ENCODE measurements at regions of chr20 and their contacts with region 1.

Region 1: GRCh38 chr20:47379433-47380150 is 23.1 kb upstream of the ZMYND8 start:
- DNase-seq: no peak
- ATAC-seq: no peak
- H3K4me3 ChIP-seq: no peak overlapping the region
- H3K4me3 Mint-ChIP-seq: peak overlapping the region in 1 of 10 donors; percentile 11
- H3K27ac ChIP-seq: no peak overlapping the region
- H3K27ac Mint-ChIP-seq: peak overlapping the region in 2 of 9 donors; percentile 52 to 73
- H3K4me1 ChIP-seq: peaks cover 0 to 6% of the 10 kb centered on the region in 2 donors
- H3K4me1 Mint-ChIP-seq: peaks cover 0 to 33% (median 10%) of the 10 kb centered on the region in 7 donors
- H3K27me3 ChIP-seq: peaks cover 0 to 2% of the 10 kb centered on the region in 2 donors
- H3K27me3 Mint-ChIP-seq: no peaks in the 10 kb centered on the region

Region 2: GRCh38 chr20:47196091-47197081 is 183.2 kb before region 1 on chr20:
- CTCF ChIA-PET with region 1: interaction called, 31 read pairs
- POLR2A ChIA-PET with region 1: interaction called, 4 read pairs
- intact Hi-C with region 1: loop called (anchors 1 kb)
- DNase-seq: peak; percentile 38 to 85 (median 54)
- ATAC-seq: peak; percentile 91
- H3K4me3 ChIP-seq: no peak overlapping the region
- H3K4me3 Mint-ChIP-seq: peak overlapping the region in 1 of 10 donors; percentile 38
- H3K27ac ChIP-seq: no peak overlapping the region
- H3K27ac Mint-ChIP-seq: no peak overlapping the region
- H3K4me1 ChIP-seq: no peaks in the 10 kb centered on the region
- H3K4me1 Mint-ChIP-seq: peaks cover 0 to 12% (median 0%) of the 10 kb centered on the region in 7 donors
- H3K27me3 ChIP-seq: no peaks in the 10 kb centered on the region
- H3K27me3 Mint-ChIP-seq: peaks cover 0 to 8% (median 0%) of the 10 kb centered on the region in 5 donors

Region 3: GRCh38 chr20:47206962-47207641 is 172.5 kb before region 1 on chr20:
- CTCF ChIA-PET with region 1: no interaction called
- POLR2A ChIA-PET with region 1: no interaction called
- intact Hi-C with region 1: no loop called
- DNase-seq: no peak
- ATAC-seq: no peak
- H3K4me3 ChIP-seq: no peak overlapping the region
- H3K4me3 Mint-ChIP-seq: no peak overlapping the region
- H3K27ac ChIP-seq: no peak overlapping the region
- H3K27ac Mint-ChIP-seq: peak overlapping the region in 4 of 9 donors; percentile 8 to 69 (median 24)
- H3K4me1 ChIP-seq: no peaks in the 10 kb centered on the region
- H3K4me1 Mint-ChIP-seq: peaks cover 0 to 7% (median 4%) of the 10 kb centered on the region in 7 donors
- H3K27me3 ChIP-seq: no peaks in the 10 kb centered on the region
- H3K27me3 Mint-ChIP-seq: no peaks in the 10 kb centered on the region

Region 4: DNA sequence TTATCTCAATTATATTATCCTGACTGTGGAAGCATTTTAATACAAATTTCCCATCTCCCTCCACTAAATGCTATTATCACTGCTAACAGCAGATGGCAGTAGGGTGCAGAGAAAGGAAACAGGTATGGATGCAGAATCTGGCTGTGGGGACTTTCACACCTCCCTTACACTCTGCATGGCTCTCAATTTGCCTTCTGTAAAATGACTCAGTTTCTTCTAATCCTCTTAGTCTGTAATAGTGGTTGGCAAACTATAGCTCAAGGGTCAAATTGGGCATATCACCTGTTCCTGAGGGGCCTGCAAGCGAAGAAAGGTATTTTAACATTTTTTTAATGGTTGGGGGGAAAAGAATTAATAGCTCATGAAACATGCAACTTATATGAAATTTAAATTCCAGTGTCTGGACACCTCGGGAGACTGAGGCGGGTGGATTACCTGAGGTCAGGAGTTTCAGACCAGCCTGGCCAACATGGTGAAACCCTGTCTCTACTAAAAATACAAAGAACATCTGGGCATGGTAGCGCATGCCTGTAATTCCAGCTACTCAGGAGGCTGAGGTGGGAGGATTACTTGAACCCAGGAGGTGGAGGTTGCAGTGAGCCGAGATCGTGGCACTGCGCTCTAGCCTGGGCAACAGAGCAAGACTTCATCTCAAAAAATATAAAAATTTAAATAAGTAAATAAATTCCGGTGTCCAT is 106.5 kb before region 1 on chr20:
- CTCF ChIA-PET with region 1: interaction called, 305 read pairs
- POLR2A ChIA-PET with region 1: interaction called, 16 read pairs
- intact Hi-C with region 1: loop called (anchors 1 kb)
- DNase-seq: peak in 8 of 9 donors; percentile 32 to 72 (median 56)
- ATAC-seq: peak; percentile 91
- H3K4me3 ChIP-seq: no peak overlapping the region
- H3K4me3 Mint-ChIP-seq: peak overlapping the region in 1 of 10 donors; percentile 35
- H3K27ac ChIP-seq: no peak overlapping the region
- H3K27ac Mint-ChIP-seq: peak overlapping the region in 6 of 9 donors; percentile 4 to 94 (median 59)
- H3K4me1 ChIP-seq: peaks cover 0 to 2% of the 10 kb centered on the region in 2 donors
- H3K4me1 Mint-ChIP-seq: peaks cover 0 to 43% (median 13%) of the 10 kb centered on the region in 7 donors
- H3K27me3 ChIP-seq: no peaks in the 10 kb centered on the region
- H3K27me3 Mint-ChIP-seq: no peaks in the 10 kb centered on the region

Region 5: GRCh38 chr20:47348539-47349142 is 31.0 kb before region 1 on chr20:
- CTCF ChIA-PET with region 1: interaction called, 18 read pairs
- POLR2A ChIA-PET with region 1: interaction called, 4 read pairs
- intact Hi-C with region 1: loop called in 1 of 2 experiments (anchors 2 kb)
- DNase-seq: no peak
- ATAC-seq: no peak
- H3K4me3 ChIP-seq: no peak overlapping the region
- H3K4me3 Mint-ChIP-seq: no peak overlapping the region
- H3K27ac ChIP-seq: no peak overlapping the region
- H3K27ac Mint-ChIP-seq: no peak overlapping the region
- H3K4me1 ChIP-seq: peaks cover 39 to 71% of the 10 kb centered on the region in 2 donors
- H3K4me1 Mint-ChIP-seq: peaks cover 13 to 39% (median 16%) of the 10 kb centered on the region in 7 donors
- H3K27me3 ChIP-seq: no peaks in the 10 kb centered on the region
- H3K27me3 Mint-ChIP-seq: no peaks in the 10 kb centered on the region

Region 6: GRCh38 chr20:47411161-47411560 is 31.6 kb after region 1 on chr20:
- CTCF ChIA-PET with region 1: interaction called, 11 read pairs
- POLR2A ChIA-PET with region 1: no interaction called
- intact Hi-C with region 1: no loop called
- DNase-seq: no peak
- ATAC-seq: no peak
- H3K4me3 ChIP-seq: no peak overlapping the region
- H3K4me3 Mint-ChIP-seq: peak overlapping the region in 1 of 10 donors; percentile 20
- H3K27ac ChIP-seq: no peak overlapping the region
- H3K27ac Mint-ChIP-seq: no peak overlapping the region
- H3K4me1 ChIP-seq: peaks cover 13 to 15% of the 10 kb centered on the region in 2 donors
- H3K4me1 Mint-ChIP-seq: peaks cover 10 to 26% (median 25%) of the 10 kb centered on the region in 7 donors
- H3K27me3 ChIP-seq: no peaks in the 10 kb centered on the region
- H3K27me3 Mint-ChIP-seq: no peaks in the 10 kb centered on the region

Region 7: GRCh38 chr20:47620808-47621805 is 241.5 kb after region 1 on chr20:
- CTCF ChIA-PET with region 1: interaction called, 26 read pairs
- POLR2A ChIA-PET with region 1: interaction called, 3 read pairs
- intact Hi-C with region 1: loop called (anchors 1 kb)
- DNase-seq: peak in 7 of 9 donors; percentile 18 to 61 (median 43)
- ATAC-seq: peak; percentile 58
- H3K4me3 ChIP-seq: no peak overlapping the region
- H3K4me3 Mint-ChIP-seq: no peak overlapping the region
- H3K27ac ChIP-seq: no peak overlapping the region
- H3K27ac Mint-ChIP-seq: peak overlapping the region in 6 of 9 donors; percentile 2 to 44 (median 10)
- H3K4me1 ChIP-seq: no peaks in the 10 kb centered on the region
- H3K4me1 Mint-ChIP-seq: peaks cover 6 to 52% (median 23%) of the 10 kb centered on the region in 7 donors
- H3K27me3 ChIP-seq: no peaks in the 10 kb centered on the region
- H3K27me3 Mint-ChIP-seq: no peaks in the 10 kb centered on the region

Measured in naive thymus-derived CD4-positive, alpha-beta T cell (primary cell).